ENCODE measurements at regions of chr1 and their contacts with region 1.

Region 1: DNA sequence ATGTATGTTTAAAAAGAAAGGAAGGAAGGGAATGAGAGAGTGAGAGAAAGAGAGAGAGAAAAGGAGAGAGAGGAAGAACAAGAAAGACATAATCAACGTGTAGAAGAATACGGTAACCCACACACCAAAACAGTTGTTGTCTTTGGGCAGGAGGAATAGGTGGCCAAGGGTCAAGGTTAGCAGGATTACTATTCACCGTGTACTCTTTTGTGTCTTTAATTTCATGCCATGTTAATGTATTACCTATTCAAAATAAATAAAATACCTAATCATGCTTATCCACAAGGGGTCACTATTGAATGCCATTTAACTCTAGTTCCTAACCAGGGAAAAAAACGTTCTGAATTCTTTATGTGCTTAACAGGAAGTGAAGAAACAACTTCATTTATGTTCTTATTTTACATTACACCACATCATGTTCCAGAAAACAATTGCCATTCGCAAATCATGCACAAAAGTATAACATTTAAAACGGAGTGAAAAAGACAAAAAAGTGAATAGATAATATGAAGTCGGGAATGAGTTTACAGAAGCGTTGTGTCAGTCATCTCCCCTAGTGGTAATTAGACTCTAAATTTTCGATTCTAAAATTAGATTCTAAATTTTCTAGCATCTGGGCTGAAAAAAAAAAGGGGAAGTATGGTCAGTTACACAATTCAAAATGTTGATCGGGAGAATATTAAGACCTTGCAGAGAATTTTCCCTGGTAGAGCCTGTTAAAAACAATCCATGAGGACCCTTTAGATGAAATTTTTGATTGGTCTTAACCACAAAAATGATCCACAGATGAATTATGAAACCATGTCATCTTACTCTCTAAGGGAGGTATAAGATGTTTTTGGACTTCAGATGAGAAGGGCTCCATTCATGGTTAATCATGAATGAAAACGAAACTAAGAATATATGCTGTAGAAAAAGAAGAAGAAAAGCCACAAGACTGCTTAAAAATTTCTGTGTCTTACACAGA is 700 bp upstream of the KMO start:
- DNase-seq: no peak
- H3K4me3 Mint-ChIP-seq: peak overlapping the region; percentile 95
- H3K27ac Mint-ChIP-seq: peak overlapping the region; percentile 89
- H3K4me1 Mint-ChIP-seq: peaks cover 16% of the 10 kb centered on the region
- H3K27me3 Mint-ChIP-seq: peaks cover 8% of the 10 kb centered on the region

Region 2: GRCh38 chr1:241310451-241310850 is 221.0 kb before region 1 on chr1:
- intact Hi-C with region 1: no loop called
- DNase-seq: no peak
- H3K4me3 Mint-ChIP-seq: no peak overlapping the region
- H3K27ac Mint-ChIP-seq: no peak overlapping the region
- H3K4me1 Mint-ChIP-seq: no peaks in the 10 kb centered on the region
- H3K27me3 Mint-ChIP-seq: no peaks in the 10 kb centered on the region

Region 3: GRCh38 chr1:241551759-241552638 is 20.5 kb after region 1 on chr1:
- intact Hi-C with region 1: loop called (anchors 2 kb)
- DNase-seq: no peak
- H3K4me3 Mint-ChIP-seq: peak overlapping the region; percentile 78
- H3K27ac Mint-ChIP-seq: peak overlapping the region; percentile 93
- H3K4me1 Mint-ChIP-seq: peaks cover 20% of the 10 kb centered on the region
- H3K27me3 Mint-ChIP-seq: no peaks in the 10 kb centered on the region

Region 4: GRCh38 chr1:241611063-241611462 is 79.6 kb after region 1 on chr1:
- intact Hi-C with region 1: loop called (anchors 1 kb)
- DNase-seq: no peak
- H3K4me3 Mint-ChIP-seq: no peak overlapping the region
- H3K27ac Mint-ChIP-seq: no peak overlapping the region
- H3K4me1 Mint-ChIP-seq: peaks cover 14% of the 10 kb centered on the region
- H3K27me3 Mint-ChIP-seq: no peaks in the 10 kb centered on the region

Region 5: GRCh38 chr1:241640029-241640818 is 108.7 kb after region 1 on chr1 and contains the starts of genes CHML and OPN3:
- intact Hi-C with region 1: loop called (anchors 1 kb)
- DNase-seq: peak; percentile 90
- H3K4me3 Mint-ChIP-seq: peak within 1 kb of the TSS; percentile 84
- H3K27ac Mint-ChIP-seq: peak within 1 kb of the TSS; percentile 85
- H3K4me1 Mint-ChIP-seq: peaks cover 54% of the 10 kb centered on the region
- H3K27me3 Mint-ChIP-seq: no peaks in the 10 kb centered on the region
- total RNA-seq, gene CHML: 17.8 and 20.8 TPM in 2 replicates
- total RNA-seq, gene OPN3: 9.5 and 11.1 TPM in 2 replicates

Region 6: DNA sequence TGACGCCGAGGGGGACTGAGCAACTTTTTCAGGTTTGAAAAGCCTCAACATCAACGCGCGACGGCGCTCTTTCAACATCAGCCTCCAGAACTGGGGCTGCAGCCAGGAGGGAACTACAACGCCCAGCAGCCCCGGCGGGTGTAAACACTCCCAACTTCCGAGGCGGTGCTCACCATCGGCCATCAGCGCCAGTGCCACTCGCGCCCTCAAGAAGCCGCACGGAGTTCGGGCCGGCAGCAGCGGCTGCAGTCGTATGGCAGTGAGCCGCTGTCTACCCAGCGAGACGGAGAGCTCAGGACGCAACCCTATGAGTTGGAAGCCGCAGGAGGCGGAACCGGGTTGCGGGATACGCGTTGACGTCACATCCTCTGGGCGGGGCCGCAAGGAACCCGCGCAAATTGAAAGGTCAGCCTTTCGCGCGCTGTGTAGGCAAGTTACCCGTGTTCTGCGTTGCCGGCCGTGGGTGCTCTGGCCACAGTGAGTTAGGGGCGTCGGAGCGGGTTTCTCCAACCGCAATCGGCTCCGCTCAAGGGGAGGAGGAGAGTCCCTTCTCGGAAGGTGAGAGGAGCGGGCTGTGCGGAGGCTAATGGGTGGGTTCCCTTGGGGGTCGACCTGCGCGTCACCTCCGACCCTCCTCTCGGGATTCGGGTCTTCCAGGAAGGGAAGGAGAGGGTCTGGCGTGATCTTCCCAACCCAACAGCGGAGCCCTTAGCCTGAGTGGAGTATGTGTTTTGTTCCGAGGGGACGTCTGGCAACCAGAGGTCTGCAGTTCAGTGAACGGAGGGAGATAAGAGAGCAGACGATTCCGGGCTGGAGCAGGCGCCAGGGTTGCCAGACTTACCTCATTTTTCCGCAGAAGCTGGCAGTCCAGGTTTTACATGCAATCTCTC is 316.6 kb after region 1 on chr1 and contains the start of gene EXO1:
- intact Hi-C with region 1: loop called (anchors 1 kb)
- DNase-seq: peak; percentile 85
- H3K4me3 Mint-ChIP-seq: peak within 1 kb of the TSS; percentile 97
- H3K27ac Mint-ChIP-seq: peak within 1 kb of the TSS; percentile 98
- H3K4me1 Mint-ChIP-seq: peaks cover 36% of the 10 kb centered on the region
- H3K27me3 Mint-ChIP-seq: peaks cover 2% of the 10 kb centered on the region
- total RNA-seq, gene EXO1: 52.2 and 58.0 TPM in 2 replicates

Region 7: DNA sequence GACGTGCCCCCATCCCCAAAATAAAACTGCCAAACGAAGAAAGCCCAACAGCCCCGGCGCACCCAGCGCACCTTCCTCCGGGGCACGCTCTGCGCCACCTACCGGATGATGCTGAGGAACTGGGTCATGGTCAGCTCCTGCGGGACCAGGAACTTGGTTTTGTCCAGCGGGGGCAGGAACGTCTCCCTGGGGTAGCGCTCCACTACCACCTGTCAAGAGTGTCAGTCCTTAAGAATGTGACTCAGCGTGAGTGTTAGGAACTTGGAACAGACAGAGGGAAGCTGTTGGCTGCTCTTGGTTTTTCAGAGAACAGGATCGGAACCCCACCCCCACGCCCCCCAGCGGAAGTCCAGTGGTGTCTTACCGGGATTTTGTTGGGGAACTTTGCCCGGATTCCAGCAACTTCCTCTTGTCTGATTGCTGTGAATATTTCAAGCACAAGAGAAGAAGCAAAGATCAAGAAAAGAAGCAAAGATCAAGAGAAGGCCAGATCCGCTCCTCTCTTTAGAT is 467.0 kb after region 1 on chr1:
- intact Hi-C with region 1: loop called (anchors 1 kb)
- DNase-seq: peak; percentile 23
- H3K4me3 Mint-ChIP-seq: peak overlapping the region; percentile 48
- H3K27ac Mint-ChIP-seq: no peak overlapping the region
- H3K4me1 Mint-ChIP-seq: peaks cover 4% of the 10 kb centered on the region
- H3K27me3 Mint-ChIP-seq: peaks cover 1% of the 10 kb centered on the region

Measured in activated T-helper 1 cell treated with anti-CD3 and anti-CD28 coated beads, Interleukin-12 subunit alpha, Interleukin-12 subunit beta, Interleukin-2, Interleukin-4 antibody, amounts not matched to agents 30 ng/mL and 10 ng/mL and 1 ng/mL, durations not matched to agents 14 hours and 24 hours and 36 hours (primary cell).